ENCODE measurements at regions of chr4 and their contacts with region 1.

Region 1: GRCh38 chr4:88613417-88613875 is 21.2 kb downstream of the HERC3 start:
- DNase-seq: peak; percentile 76 to 87 (median 84)
- H3K4me3 ChIP-seq: peak overlapping the region in 1 of 2 donors; percentile 43
- H3K4me3 Mint-ChIP-seq: peak overlapping the region; percentile 69 to 88 (median 79)
- H3K27ac ChIP-seq: peak overlapping the region; percentile 62
- H3K27ac Mint-ChIP-seq: peak overlapping the region; percentile 93 to 99 (median 97)
- H3K4me1 ChIP-seq: peaks cover 67% of the 10 kb centered on the region
- H3K4me1 Mint-ChIP-seq: peaks cover 65 to 91% (median 77%) of the 10 kb centered on the region in 4 donors
- H3K27me3 ChIP-seq: no peaks in the 10 kb centered on the region
- H3K27me3 Mint-ChIP-seq: no peaks in the 10 kb centered on the region

Region 2: DNA sequence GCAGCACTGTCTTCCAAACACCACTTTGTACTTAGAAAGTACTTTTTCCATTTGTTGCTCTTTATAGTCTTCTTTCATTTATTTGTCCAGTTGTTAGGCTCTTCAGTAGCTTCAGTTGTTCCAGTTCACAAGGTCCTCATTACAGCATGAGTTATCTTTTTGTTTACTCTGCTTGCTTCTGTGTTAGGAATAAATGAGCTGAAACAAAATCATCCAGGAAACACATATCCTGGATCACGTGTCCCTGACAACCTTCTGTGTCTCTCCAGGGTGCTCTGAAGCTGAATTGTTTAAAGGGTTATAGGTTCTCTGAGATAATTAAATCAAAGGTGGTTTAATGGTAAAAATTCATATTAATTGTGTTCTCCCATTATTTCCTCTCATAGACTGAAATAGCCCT is 1373.1 kb before region 1 on chr4:
- CTCF ChIA-PET with region 1: no interaction called
- POLR2A ChIA-PET with region 1: no interaction called
- intact Hi-C with region 1: no loop called
- DNase-seq: no peak
- H3K4me3 ChIP-seq: no peak overlapping the region
- H3K4me3 Mint-ChIP-seq: no peak overlapping the region
- H3K27ac ChIP-seq: no peak overlapping the region
- H3K27ac Mint-ChIP-seq: no peak overlapping the region
- H3K4me1 ChIP-seq: peaks cover 5% of the 10 kb centered on the region
- H3K4me1 Mint-ChIP-seq: peaks cover 0 to 7% (median under 1%) of the 10 kb centered on the region in 4 donors
- H3K27me3 ChIP-seq: peaks cover 4% of the 10 kb centered on the region
- H3K27me3 Mint-ChIP-seq: peaks cover 2 to 4% of the 10 kb centered on the region in 2 donors

Region 3: DNA sequence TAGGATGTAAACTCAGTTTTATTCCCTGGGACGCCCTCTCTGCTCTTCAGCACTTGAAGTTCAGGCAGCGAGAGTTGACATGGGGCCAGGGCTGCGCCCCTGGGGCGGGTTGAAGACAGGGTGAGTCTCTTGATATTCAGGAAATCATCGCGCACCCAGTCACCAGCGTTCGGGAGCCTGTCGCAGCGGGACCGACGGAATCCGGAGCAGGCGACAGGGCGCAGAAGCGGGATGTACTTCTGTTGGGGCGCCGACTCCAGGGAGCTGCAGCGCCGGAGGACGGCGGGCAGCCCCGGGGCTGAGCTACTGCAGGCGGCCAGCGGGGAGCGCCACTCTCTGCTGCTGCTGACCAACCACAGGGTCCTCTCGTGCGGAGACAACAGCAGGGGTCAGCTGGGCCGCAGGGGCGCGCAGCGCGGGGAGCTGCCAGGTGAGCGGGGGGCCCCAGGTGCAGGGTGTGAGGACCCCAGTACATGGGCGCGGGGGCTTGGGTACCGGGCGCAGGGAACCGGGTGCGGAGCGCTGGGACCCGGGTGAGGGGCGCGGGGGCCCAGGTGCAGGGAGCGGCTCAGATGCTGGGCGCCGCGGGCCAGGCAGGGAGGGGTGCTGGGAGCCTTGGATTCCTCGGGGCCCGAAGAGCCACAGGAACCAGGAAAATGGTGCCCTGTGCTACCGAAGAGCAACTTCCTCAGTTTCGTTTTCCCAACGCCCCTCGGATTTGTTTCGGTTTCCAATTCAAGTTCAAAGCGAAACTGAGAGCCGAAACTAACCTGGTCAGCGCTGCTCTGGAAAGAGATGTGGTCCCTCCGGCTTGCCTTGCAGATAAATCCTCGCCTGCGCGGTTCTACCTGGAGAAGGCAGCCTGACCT is 234.5 kb before region 1 on chr4 and contains the start of gene HERC6:
- CTCF ChIA-PET with region 1: no interaction called
- POLR2A ChIA-PET with region 1: no interaction called
- intact Hi-C with region 1: loop called (anchors 2 kb)
- DNase-seq: peak; percentile 74 to 89 (median 80)
- H3K4me3 ChIP-seq: peak within 1 kb of the TSS; percentile 82 to 96
- H3K4me3 Mint-ChIP-seq: peak within 1 kb of the TSS; percentile 95 to 99 (median 97)
- H3K27ac ChIP-seq: peak within 1 kb of the TSS; percentile 86
- H3K27ac Mint-ChIP-seq: peak within 1 kb of the TSS; percentile 94 to 98 (median 97)
- H3K4me1 ChIP-seq: peaks cover 37% of the 10 kb centered on the region
- H3K4me1 Mint-ChIP-seq: peaks cover 37 to 54% (median 43%) of the 10 kb centered on the region in 4 donors
- H3K27me3 ChIP-seq: no peaks in the 10 kb centered on the region
- H3K27me3 Mint-ChIP-seq: no peaks in the 10 kb centered on the region
- total RNA-seq, gene HERC6: 26.8 to 29.5 TPM

Region 4: DNA sequence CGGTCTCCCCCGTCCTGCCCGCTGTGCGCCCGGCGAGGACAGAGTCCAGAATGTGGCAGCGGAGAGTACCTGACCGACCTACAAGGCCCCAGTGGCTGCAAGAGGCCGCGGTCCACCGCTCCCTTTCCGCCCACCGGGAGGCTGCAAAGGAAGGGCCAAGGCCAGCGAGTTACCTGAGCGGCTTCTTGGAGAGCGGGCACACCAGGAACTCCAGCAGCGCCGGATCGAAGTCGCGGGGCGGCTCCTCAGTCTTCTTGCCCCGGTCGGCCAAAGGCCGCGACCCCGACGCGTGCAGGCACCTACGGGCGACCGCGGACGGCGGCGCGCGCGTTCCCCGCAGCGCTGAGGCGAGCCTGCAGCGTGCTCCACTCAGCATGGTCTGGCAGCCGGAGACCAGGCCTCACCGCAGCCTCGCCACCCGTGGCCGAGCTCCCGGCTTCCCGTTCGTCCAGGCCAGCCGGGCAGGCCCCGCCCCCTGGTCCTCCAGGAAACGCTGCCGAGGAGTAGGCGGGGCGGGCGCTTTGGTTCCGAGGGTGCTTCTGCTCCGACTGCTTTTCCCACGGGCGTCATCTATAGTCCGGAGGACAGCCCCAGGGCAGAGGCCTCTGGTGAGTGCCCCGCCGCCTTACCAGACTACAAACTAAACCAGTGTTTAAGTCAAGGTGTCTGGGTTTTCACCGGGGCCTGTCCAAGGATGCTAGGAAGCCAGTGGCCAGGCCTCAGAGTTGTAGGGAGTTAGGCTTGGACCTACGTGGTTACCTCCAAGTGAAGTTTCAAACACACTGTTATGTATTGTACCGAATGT is 89.9 kb before region 1 on chr4 and contains the start of gene PYURF:
- CTCF ChIA-PET with region 1: interaction called, 10 read pairs
- POLR2A ChIA-PET with region 1: interaction called, 4 read pairs
- intact Hi-C with region 1: no loop called
- DNase-seq: peak; percentile 60 to 73 (median 64)
- H3K4me3 ChIP-seq: peak within 1 kb of the TSS; percentile 62 to 69
- H3K4me3 Mint-ChIP-seq: peak within 1 kb of the TSS; percentile 91 to 97 (median 94)
- H3K27ac ChIP-seq: peak within 1 kb of the TSS; percentile 60
- H3K27ac Mint-ChIP-seq: peak within 1 kb of the TSS; percentile 89 to 96 (median 93)
- H3K4me1 ChIP-seq: peaks cover 17% of the 10 kb centered on the region
- H3K4me1 Mint-ChIP-seq: peaks cover 22 to 46% (median 32%) of the 10 kb centered on the region in 4 donors
- H3K27me3 ChIP-seq: no peaks in the 10 kb centered on the region
- H3K27me3 Mint-ChIP-seq: no peaks in the 10 kb centered on the region
- total RNA-seq, gene PYURF: 54.5 to 60.4 TPM

Region 5: DNA sequence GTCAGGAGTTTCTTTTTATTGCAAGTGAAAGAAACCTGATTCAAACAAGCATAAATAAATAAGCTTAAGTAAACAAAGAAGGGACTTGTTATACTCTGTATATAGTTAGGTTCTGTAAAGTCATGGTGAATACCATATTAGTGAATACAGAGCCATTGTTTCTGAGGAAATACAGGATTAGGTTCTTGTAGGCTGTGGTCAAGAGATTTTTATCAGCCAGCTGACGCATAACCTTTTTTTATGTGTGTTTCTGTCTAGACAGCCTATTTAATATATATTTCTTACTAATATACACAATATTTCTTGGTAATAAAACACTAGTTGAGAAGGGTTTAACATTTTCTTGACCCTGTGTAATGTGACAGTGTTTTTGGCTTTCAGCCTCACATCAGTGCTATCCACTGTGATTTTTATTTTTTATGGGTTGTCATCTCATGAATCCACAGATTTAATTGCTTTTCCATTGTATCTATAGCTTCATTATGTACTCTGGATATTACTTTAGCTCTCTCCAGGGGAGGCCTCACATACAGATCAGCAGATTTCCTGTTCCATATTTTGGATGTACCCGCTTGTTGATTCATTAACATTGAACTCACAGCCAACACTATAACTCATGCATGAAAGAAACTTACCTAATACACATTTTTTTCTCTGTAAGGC is 13.1 kb before region 1 on chr4:
- CTCF ChIA-PET with region 1: interaction called, 26 read pairs
- POLR2A ChIA-PET with region 1: interaction called, 163 read pairs
- intact Hi-C with region 1: no loop called
- DNase-seq: no peak
- H3K4me3 ChIP-seq: no peak overlapping the region
- H3K4me3 Mint-ChIP-seq: peak overlapping the region in 5 of 8 donors; percentile 18 to 63 (median 22)
- H3K27ac ChIP-seq: no peak overlapping the region
- H3K27ac Mint-ChIP-seq: peak overlapping the region; percentile 24 to 78 (median 61)
- H3K4me1 ChIP-seq: peaks cover 70% of the 10 kb centered on the region
- H3K4me1 Mint-ChIP-seq: peaks cover 53 to 82% (median 70%) of the 10 kb centered on the region in 4 donors
- H3K27me3 ChIP-seq: no peaks in the 10 kb centered on the region
- H3K27me3 Mint-ChIP-seq: no peaks in the 10 kb centered on the region

Region 6: GRCh38 chr4:88646528-88647280 is 33.3 kb after region 1 on chr4:
- CTCF ChIA-PET with region 1: interaction called, 3 read pairs
- POLR2A ChIA-PET with region 1: interaction called, 3 read pairs
- intact Hi-C with region 1: loop called (anchors 5 kb)
- DNase-seq: no peak
- H3K4me3 ChIP-seq: no peak overlapping the region
- H3K4me3 Mint-ChIP-seq: peak overlapping the region in 2 of 8 donors; percentile 7 to 22
- H3K27ac ChIP-seq: no peak overlapping the region
- H3K27ac Mint-ChIP-seq: peak overlapping the region in 4 of 7 donors; percentile 14 to 73 (median 42)
- H3K4me1 ChIP-seq: peaks cover 29% of the 10 kb centered on the region
- H3K4me1 Mint-ChIP-seq: peaks cover 45 to 58% (median 50%) of the 10 kb centered on the region in 4 donors
- H3K27me3 ChIP-seq: no peaks in the 10 kb centered on the region
- H3K27me3 Mint-ChIP-seq: no peaks in the 10 kb centered on the region

Region 7: DNA sequence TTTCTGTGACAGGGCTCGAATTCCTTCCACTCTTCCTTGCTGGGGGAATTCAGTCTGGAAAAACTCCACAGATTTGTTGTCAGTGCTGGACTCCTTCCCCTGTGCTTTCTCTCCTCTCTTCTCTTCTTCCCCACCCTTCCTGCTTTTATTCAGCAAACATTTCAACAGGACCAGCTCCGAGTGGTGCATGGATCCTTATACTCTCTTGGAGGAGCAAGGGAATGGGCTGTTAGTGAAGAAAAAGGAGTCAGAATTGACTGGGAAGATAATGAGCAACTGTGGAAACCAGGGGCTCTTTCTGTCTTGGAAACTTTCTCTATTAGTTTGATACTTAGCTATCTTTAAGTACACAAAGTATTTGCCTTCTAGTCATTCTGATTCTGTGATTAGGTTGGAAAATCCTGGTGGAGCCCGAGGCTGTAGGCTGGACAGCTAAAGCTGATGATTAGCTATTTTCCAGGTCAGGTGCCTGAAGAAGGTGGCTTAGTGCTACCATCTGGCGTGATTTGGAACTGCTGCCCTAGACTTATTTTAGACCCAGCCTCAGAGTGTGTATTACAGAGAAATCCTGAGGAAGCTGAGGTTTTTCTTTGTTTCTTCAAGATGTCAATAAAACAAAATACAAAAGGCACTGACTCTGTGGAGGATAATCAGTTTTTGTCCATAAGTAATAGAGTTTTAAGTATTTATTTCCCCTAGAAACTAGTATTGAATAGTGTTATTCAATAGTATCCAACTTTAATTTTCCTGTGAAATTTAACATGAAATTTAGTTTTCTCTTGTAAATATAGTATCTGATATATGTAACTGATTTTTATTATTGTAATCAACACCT is 45.8 kb after region 1 on chr4:
- CTCF ChIA-PET with region 1: interaction called, 15 read pairs
- POLR2A ChIA-PET with region 1: interaction called, 3 read pairs
- intact Hi-C with region 1: no loop called
- DNase-seq: peak; percentile 32 to 47 (median 41)
- H3K4me3 ChIP-seq: no peak overlapping the region
- H3K4me3 Mint-ChIP-seq: no peak overlapping the region
- H3K27ac ChIP-seq: no peak overlapping the region
- H3K27ac Mint-ChIP-seq: peak overlapping the region in 5 of 7 donors; percentile 2 to 71 (median 55)
- H3K4me1 ChIP-seq: peaks cover 5% of the 10 kb centered on the region
- H3K4me1 Mint-ChIP-seq: peaks cover 6 to 18% (median 9%) of the 10 kb centered on the region in 4 donors
- H3K27me3 ChIP-seq: no peaks in the 10 kb centered on the region
- H3K27me3 Mint-ChIP-seq: no peaks in the 10 kb centered on the region

Measured in CD4-positive, alpha-beta memory T cell (primary cell).